Calu3 (cell line): ENCODE measurements at regions of chr12 and their contacts with region 1.

Region 1: GRCh38 chr12:101616027-101616494 is 21.3 kb downstream of the MYBPC1 start:
- DNase-seq: peak; percentile 61
- H3K4me3 Mint-ChIP-seq: peak overlapping the region; percentile 55
- H3K27ac Mint-ChIP-seq: peak overlapping the region; percentile 79
- H3K4me1 Mint-ChIP-seq: peaks cover 53% of the 10 kb centered on the region
- H3K27me3 Mint-ChIP-seq: no peaks in the 10 kb centered on the region
- CTCF ChIP-seq: no peak

Region 2: DNA sequence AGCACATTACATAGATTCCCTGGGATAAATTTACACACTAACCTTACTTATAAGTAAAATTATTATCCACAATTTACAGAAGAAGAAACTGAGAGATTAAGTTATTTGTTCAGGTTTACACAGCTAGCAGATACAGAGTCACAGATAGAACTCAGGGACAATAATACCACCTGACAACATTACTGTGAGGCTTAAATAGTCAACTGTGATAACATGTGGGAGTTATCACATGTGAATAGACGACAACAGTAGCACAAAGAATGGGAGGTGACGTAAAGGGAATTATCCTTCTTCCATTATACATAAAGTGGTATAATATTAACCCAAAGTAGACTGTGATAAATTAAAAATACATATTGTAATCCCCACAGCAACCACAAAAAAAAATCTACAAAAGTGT is 147.1 kb before region 1 on chr12:
- CTCF ChIA-PET with region 1: no interaction called
- intact Hi-C with region 1: no loop called
- DNase-seq: no peak
- H3K4me3 Mint-ChIP-seq: no peak overlapping the region
- H3K27ac Mint-ChIP-seq: no peak overlapping the region
- H3K4me1 Mint-ChIP-seq: no peaks in the 10 kb centered on the region
- H3K27me3 Mint-ChIP-seq: no peaks in the 10 kb centered on the region
- CTCF ChIP-seq: no peak

Region 3: GRCh38 chr12:101697197-101697929 is 81.3 kb after region 1 on chr12 and contains the start of gene CHPT1:
- CTCF ChIA-PET with region 1: no interaction called
- intact Hi-C with region 1: loop called (anchors 5 kb)
- DNase-seq: peak; percentile 66
- H3K4me3 Mint-ChIP-seq: peak within 1 kb of the TSS; percentile 92
- H3K27ac Mint-ChIP-seq: peak within 1 kb of the TSS; percentile 78
- H3K4me1 Mint-ChIP-seq: peaks cover 46% of the 10 kb centered on the region
- H3K27me3 Mint-ChIP-seq: no peaks in the 10 kb centered on the region
- CTCF ChIP-seq: no peak
- total RNA-seq, gene CHPT1: 45.5 and 49.2 TPM in 2 replicates